B cell (primary cell): ENCODE measurements at regions of chr6 and their contacts with region 1.

Region 1: GRCh38 chr6:16514249-16514648 is 247.0 kb downstream of the ATXN1 start:
- DNase-seq: peak; percentile 42
- ATAC-seq: peak; percentile 47
- H3K4me3 ChIP-seq: no peak overlapping the region
- H3K4me3 Mint-ChIP-seq: no peak overlapping the region
- H3K27ac ChIP-seq: no peak overlapping the region
- H3K27ac Mint-ChIP-seq: peak overlapping the region; percentile 33
- H3K4me1 ChIP-seq: peaks cover 4 to 36% of the 10 kb centered on the region in 2 donors
- H3K4me1 Mint-ChIP-seq: peaks cover 42% of the 10 kb centered on the region
- H3K27me3 ChIP-seq: no peaks in the 10 kb centered on the region
- H3K27me3 Mint-ChIP-seq: no peaks in the 10 kb centered on the region
- CTCF ChIP-seq: peak; percentile 50

Region 2: DNA sequence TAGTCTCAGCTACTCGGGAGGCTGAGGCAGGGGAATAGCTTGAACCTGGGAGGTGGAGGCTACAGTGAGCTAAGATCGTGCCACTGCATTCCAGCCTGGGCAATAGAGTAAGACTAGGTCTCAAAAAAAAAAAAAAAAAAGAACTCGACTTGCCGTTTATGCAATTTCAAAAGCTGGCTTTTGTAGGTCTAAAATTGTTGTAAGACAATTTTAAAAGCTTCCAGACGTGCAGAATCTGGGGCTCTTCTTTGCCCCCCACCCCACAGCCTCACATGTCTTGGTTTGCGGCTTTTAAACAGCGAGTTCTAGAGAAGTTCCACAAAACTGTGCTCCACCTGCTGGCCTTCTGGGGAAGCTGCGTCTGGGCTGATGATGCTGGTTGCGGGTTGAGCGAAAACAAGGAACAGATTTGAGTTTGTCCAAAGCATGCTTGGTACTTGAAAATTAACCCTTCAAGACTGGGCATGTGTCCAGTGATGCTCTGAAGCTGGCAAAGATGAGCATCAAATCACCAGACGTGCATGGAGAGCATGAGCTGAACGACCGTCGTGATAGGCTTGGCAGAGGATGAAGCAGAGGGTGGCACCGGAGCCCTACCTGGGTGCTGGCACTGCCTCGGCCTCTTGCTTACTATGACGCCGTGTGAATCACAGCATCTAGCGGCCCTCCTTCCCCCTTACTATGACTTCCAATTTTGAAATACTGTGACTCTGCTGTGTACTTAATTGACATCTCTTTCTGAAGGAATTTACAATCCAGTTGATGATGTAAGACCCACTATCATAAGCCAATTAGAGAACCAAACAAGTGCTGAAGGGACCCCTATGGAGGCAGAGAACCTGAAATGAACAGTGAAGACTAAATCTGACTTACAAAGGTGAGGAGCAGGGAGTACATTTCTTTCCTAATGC is 104.5 kb before region 1 on chr6:
- CTCF ChIA-PET with region 1: interaction called, 72 read pairs
- POLR2A ChIA-PET with region 1: interaction called, 7 read pairs
- intact Hi-C with region 1: no loop called
- DNase-seq: peak; percentile 75
- ATAC-seq: peak; percentile 64
- H3K4me3 ChIP-seq: no peak overlapping the region
- H3K4me3 Mint-ChIP-seq: peak overlapping the region; percentile 53
- H3K27ac ChIP-seq: no peak overlapping the region
- H3K27ac Mint-ChIP-seq: peak overlapping the region; percentile 66
- H3K4me1 ChIP-seq: peaks cover 10 to 50% of the 10 kb centered on the region in 2 donors
- H3K4me1 Mint-ChIP-seq: peaks cover 60% of the 10 kb centered on the region
- H3K27me3 ChIP-seq: no peaks in the 10 kb centered on the region
- H3K27me3 Mint-ChIP-seq: no peaks in the 10 kb centered on the region
- CTCF ChIP-seq: peak; percentile 77

Region 3: GRCh38 chr6:16471222-16471909 is 42.9 kb before region 1 on chr6:
- CTCF ChIA-PET with region 1: interaction called, 15 read pairs
- POLR2A ChIA-PET with region 1: no interaction called
- intact Hi-C with region 1: loop called (anchors 5 kb)
- DNase-seq: peak; percentile 64
- ATAC-seq: peak; percentile 83
- H3K4me3 ChIP-seq: no peak overlapping the region
- H3K4me3 Mint-ChIP-seq: peak overlapping the region; percentile 58
- H3K27ac ChIP-seq: peak overlapping the region in 1 of 2 donors; percentile 6
- H3K27ac Mint-ChIP-seq: peak overlapping the region; percentile 71
- H3K4me1 ChIP-seq: peaks cover 14 to 39% of the 10 kb centered on the region in 2 donors
- H3K4me1 Mint-ChIP-seq: peaks cover 56% of the 10 kb centered on the region
- H3K27me3 ChIP-seq: no peaks in the 10 kb centered on the region
- H3K27me3 Mint-ChIP-seq: no peaks in the 10 kb centered on the region
- CTCF ChIP-seq: no peak

Region 4: DNA sequence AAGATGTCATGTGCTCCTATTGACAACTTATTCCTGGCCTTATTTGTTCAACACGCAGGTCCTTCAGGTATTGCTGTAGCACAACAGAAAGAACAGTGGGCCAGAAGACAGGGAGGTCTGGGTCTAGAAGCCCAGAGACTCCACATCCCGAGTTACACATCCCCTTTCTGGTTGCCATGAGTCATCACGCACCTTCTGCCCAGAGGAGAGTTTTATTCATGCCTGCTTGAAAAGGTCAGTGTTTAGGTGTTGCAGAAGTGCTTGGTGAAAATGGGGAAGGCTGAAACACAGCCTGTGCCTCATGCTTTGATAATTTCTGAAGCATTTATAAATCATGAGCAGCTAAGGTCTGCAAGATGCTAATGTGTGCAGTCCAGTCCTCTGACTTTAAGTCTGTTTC is 19.5 kb before region 1 on chr6:
- CTCF ChIA-PET with region 1: interaction called, 19 read pairs
- POLR2A ChIA-PET with region 1: no interaction called
- intact Hi-C with region 1: no loop called
- DNase-seq: peak; percentile 35
- ATAC-seq: peak; percentile 87
- H3K4me3 ChIP-seq: no peak overlapping the region
- H3K4me3 Mint-ChIP-seq: peak overlapping the region; percentile 46
- H3K27ac ChIP-seq: no peak overlapping the region
- H3K27ac Mint-ChIP-seq: peak overlapping the region; percentile 75
- H3K4me1 ChIP-seq: peaks cover 5 to 15% of the 10 kb centered on the region in 2 donors
- H3K4me1 Mint-ChIP-seq: peaks cover 34% of the 10 kb centered on the region
- H3K27me3 ChIP-seq: no peaks in the 10 kb centered on the region
- H3K27me3 Mint-ChIP-seq: no peaks in the 10 kb centered on the region
- CTCF ChIP-seq: no peak

Region 5: DNA sequence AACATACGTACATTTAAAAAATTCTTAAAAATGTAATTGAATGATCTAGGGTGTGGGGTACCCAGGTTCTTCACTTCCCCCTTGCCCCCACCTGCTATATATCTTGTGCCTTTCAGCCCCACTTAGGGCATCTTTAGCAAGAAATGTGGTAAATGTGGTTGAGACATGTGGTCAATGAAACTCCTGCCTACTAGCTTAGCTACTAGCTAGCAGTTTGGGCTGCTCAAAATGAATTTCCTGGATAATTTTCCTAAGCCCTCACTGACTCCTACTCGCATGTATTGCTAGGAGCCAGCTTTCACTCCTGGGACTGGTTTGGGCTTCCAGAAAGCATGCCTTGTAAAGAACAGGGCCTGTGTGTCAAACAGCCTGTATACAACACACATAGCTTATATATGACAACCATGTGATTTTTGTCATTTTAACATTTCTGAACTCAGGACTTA is 10.3 kb before region 1 on chr6:
- CTCF ChIA-PET with region 1: interaction called, 24 read pairs
- POLR2A ChIA-PET with region 1: interaction called, 3 read pairs
- intact Hi-C with region 1: no loop called
- DNase-seq: peak; percentile 57
- ATAC-seq: peak; percentile 66
- H3K4me3 ChIP-seq: no peak overlapping the region
- H3K4me3 Mint-ChIP-seq: peak overlapping the region; percentile 81
- H3K27ac ChIP-seq: no peak overlapping the region
- H3K27ac Mint-ChIP-seq: peak overlapping the region; percentile 90
- H3K4me1 ChIP-seq: peaks cover 12 to 14% of the 10 kb centered on the region in 2 donors
- H3K4me1 Mint-ChIP-seq: peaks cover 36% of the 10 kb centered on the region
- H3K27me3 ChIP-seq: no peaks in the 10 kb centered on the region
- H3K27me3 Mint-ChIP-seq: no peaks in the 10 kb centered on the region
- CTCF ChIP-seq: no peak

Region 6: DNA sequence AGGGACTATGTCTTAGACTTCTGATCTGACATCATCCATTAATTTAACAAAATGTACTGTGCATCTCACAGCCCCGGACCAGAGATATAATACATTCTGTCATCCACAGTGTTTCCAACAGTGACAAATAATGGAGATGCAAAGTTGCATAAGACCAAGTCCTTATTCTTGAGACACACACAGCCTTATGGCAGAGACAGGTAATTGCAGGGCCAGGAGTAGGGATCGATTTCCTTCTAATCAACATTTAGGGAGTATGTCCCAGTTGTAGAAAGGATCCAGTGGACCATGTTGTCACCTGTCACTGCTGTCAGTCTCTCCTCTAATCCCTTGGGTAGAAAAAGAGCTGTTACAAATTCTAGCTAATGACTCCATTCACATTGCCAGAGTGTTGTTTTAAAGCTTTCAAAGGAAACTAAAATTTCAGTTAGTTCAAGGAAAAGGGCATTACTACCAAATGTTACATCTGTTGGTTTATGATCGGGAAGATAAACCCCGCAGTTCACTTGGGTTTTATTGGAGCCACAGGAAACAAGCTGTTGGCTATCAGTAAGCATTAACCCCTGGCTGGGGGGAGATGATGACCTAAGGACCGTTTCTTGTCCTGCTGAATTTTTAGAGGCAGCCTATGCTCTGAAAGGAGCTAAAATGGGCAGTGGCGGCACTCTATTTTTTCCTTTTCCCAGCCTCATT is 358.4 kb after region 1 on chr6:
- CTCF ChIA-PET with region 1: no interaction called
- POLR2A ChIA-PET with region 1: no interaction called
- intact Hi-C with region 1: no loop called
- DNase-seq: no peak
- ATAC-seq: no peak
- H3K4me3 ChIP-seq: no peak overlapping the region
- H3K4me3 Mint-ChIP-seq: no peak overlapping the region
- H3K27ac ChIP-seq: no peak overlapping the region
- H3K27ac Mint-ChIP-seq: no peak overlapping the region
- H3K4me1 ChIP-seq: no peaks in the 10 kb centered on the region
- H3K4me1 Mint-ChIP-seq: no peaks in the 10 kb centered on the region
- H3K27me3 ChIP-seq: no peaks in the 10 kb centered on the region
- H3K27me3 Mint-ChIP-seq: peaks cover 21% of the 10 kb centered on the region
- CTCF ChIP-seq: no peak